ENCODE measurements at regions of chr3 and their contacts with region 1.

Region 1: DNA sequence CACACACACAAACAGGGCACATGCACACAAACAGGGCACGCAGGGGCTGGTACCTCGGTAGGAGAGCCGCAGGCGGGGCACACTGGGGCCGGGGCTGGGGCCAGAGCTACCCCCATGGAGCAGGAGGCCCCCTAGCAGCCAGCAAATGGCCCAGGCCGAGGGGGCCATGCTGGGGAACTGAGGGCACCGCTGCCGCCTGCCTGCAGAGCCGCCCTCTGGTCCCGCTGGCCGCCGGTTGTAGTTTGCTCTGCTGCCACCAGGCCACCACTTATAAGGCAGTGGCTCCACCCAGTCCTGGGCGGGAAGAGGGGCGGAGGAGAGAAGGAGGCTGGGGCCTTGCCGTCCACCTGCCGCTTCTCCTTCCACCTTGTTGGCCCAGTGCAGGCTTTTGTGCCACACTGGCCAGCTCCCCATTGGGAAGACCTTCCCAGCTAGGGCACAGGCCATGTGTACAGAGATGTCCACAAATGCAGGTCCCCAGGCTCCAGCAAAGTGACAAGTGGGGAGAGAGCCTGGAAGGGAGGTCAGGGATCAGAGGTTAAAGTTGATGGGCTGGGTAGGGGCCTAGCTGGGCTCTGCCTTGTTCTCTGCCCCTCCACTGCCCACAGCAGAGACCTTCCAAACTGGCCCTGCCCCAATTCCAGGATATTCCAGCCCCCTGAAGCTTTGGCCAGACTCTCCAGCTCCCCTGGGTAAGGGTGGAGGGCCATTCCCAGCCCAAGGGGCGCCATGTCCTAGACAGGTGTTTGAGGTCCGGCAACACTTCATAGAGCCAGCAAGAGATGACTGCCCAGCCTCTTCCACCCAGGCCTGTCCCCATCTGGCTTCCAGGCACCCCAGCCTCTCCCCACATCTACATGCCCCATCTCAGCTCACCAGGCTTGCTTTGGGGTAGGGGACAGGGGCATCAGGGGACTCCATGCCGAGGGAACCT is at the start of gene SEMA3G:
- DNase-seq: peak; percentile 75 to 78
- ATAC-seq: peak; percentile 41 to 67 (median 61)
- H3K4me3 ChIP-seq: peak within 1 kb of the TSS in 9 of 10 donors; percentile 16 to 50 (median 41)
- H3K27ac ChIP-seq: peak within 1 kb of the TSS in 9 of 10 donors; percentile 10 to 68 (median 59)
- H3K4me1 ChIP-seq: peaks cover 3 to 43% (median 17%) of the 10 kb centered on the region in 9 donors
- H3K27me3 ChIP-seq: no peaks in the 10 kb centered on the region
- CTCF ChIP-seq: peak; percentile 33 to 70 (median 61)
- total RNA-seq, gene SEMA3G: 8.3 to 17.8 (median 16.2) TPM

Region 2: GRCh38 chr3:52407779-52408178 is 37.3 kb before region 1 on chr3:
- intact Hi-C with region 1: loop called in 1 of 10 experiments (anchors 1 kb)
- DNase-seq: no peak
- ATAC-seq: no peak
- H3K4me3 ChIP-seq: no peak overlapping the region
- H3K27ac ChIP-seq: no peak overlapping the region
- H3K4me1 ChIP-seq: peaks cover 6 to 45% (median 36%) of the 10 kb centered on the region in 9 donors
- H3K27me3 ChIP-seq: no peaks in the 10 kb centered on the region
- CTCF ChIP-seq: no peak

Region 3: GRCh38 chr3:52428151-52429005 is 16.7 kb before region 1 on chr3:
- intact Hi-C with region 1: loop called in 7 of 10 experiments (anchors 1 to 2 kb)
- DNase-seq: peak in 1 of 2 donors; percentile 81
- ATAC-seq: peak; percentile 69 to 87 (median 77)
- H3K4me3 ChIP-seq: no peak overlapping the region
- H3K27ac ChIP-seq: peak overlapping the region in 8 of 10 donors; percentile 3 to 86 (median 70)
- H3K4me1 ChIP-seq: peaks cover 19 to 48% (median 39%) of the 10 kb centered on the region in 9 donors
- H3K27me3 ChIP-seq: no peaks in the 10 kb centered on the region
- CTCF ChIP-seq: peak; percentile 55 to 86 (median 79)

Measured in heart right ventricle (tissue), 16 donors.